CD4-positive, alpha-beta memory T cell (primary cell): ENCODE measurements at regions of chr14 and their contacts with region 1.

Region 1: GRCh38 chr14:49908432-49908781 is 15.5 kb downstream of the ARF6 start:
- DNase-seq: no peak
- H3K4me3 ChIP-seq: no peak overlapping the region
- H3K4me3 Mint-ChIP-seq: peak overlapping the region in 1 of 8 donors; percentile 39
- H3K27ac ChIP-seq: no peak overlapping the region
- H3K27ac Mint-ChIP-seq: peak overlapping the region in 2 of 7 donors; percentile 8 to 70
- H3K4me1 ChIP-seq: peaks cover 38% of the 10 kb centered on the region
- H3K4me1 Mint-ChIP-seq: peaks cover 18 to 42% (median 32%) of the 10 kb centered on the region in 4 donors
- H3K27me3 ChIP-seq: no peaks in the 10 kb centered on the region
- H3K27me3 Mint-ChIP-seq: no peaks in the 10 kb centered on the region

Region 2: DNA sequence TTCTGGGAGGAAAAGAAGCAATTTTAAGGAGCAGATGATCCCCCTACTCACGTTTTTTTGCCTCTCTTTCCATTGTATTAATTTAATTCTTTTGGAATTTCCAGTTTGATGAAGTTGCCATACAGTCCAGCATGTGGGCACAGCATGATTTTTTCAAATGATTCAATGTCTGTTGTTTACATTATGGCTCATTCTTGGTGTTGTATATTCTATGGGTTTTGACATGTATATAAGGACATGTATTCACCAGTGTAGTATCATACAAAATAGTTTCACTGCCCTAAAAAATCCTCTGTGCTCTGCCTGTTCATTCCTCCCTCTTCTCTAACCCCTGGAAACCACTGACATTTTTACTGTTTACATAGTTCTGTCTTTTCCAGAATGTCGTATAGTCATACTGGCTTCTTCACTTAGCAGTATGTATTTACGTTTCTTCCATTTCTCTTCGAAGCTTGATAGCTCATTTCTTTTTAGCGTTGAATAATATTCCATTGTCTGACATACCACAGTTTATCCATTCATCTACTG is 153.8 kb before region 1 on chr14:
- CTCF ChIA-PET with region 1: no interaction called
- POLR2A ChIA-PET with region 1: no interaction called
- intact Hi-C with region 1: no loop called
- DNase-seq: no peak
- H3K4me3 ChIP-seq: no peak overlapping the region
- H3K4me3 Mint-ChIP-seq: no peak overlapping the region
- H3K27ac ChIP-seq: no peak overlapping the region
- H3K27ac Mint-ChIP-seq: no peak overlapping the region
- H3K4me1 ChIP-seq: no peaks in the 10 kb centered on the region
- H3K4me1 Mint-ChIP-seq: peaks cover 0 to 1% (median 0%) of the 10 kb centered on the region in 4 donors
- H3K27me3 ChIP-seq: no peaks in the 10 kb centered on the region
- H3K27me3 Mint-ChIP-seq: no peaks in the 10 kb centered on the region

Region 3: GRCh38 chr14:49897968-49898367 is 10.4 kb before region 1 on chr14:
- CTCF ChIA-PET with region 1: interaction called, 3 read pairs
- POLR2A ChIA-PET with region 1: interaction called, 9 read pairs
- intact Hi-C with region 1: loop called (anchors 1 kb)
- DNase-seq: no peak
- H3K4me3 ChIP-seq: peak overlapping the region; percentile 33 to 58
- H3K4me3 Mint-ChIP-seq: peak overlapping the region; percentile 65 to 99 (median 84)
- H3K27ac ChIP-seq: peak overlapping the region; percentile 98
- H3K27ac Mint-ChIP-seq: peak overlapping the region; percentile 85 to 97 (median 94)
- H3K4me1 ChIP-seq: peaks cover 42% of the 10 kb centered on the region
- H3K4me1 Mint-ChIP-seq: peaks cover 21 to 62% (median 36%) of the 10 kb centered on the region in 4 donors
- H3K27me3 ChIP-seq: no peaks in the 10 kb centered on the region
- H3K27me3 Mint-ChIP-seq: no peaks in the 10 kb centered on the region

Region 4: DNA sequence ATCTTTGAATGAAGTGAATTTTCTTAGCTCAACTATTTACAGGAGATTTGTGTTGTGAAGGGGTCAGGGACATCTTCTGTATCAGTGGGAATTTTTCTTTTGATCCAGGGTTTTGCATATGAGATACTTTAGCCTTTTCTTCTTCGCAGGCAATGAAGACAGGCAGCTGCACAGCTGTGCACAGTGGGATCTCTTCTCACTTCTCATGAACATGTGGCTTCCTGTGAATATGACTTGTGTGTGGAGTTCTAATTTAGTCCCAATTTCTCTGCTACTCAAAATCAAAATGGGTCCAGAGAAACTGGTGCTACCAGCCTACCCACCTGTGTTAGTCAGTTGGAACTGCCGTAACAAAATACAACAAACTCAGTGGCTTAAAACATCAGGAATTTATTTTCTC is 22.3 kb after region 1 on chr14:
- CTCF ChIA-PET with region 1: no interaction called
- POLR2A ChIA-PET with region 1: no interaction called
- intact Hi-C with region 1: no loop called
- DNase-seq: no peak
- H3K4me3 ChIP-seq: no peak overlapping the region
- H3K4me3 Mint-ChIP-seq: peak overlapping the region in 1 of 8 donors; percentile 33
- H3K27ac ChIP-seq: no peak overlapping the region
- H3K27ac Mint-ChIP-seq: peak overlapping the region in 1 of 7 donors; percentile 23
- H3K4me1 ChIP-seq: no peaks in the 10 kb centered on the region
- H3K4me1 Mint-ChIP-seq: peaks cover 0 to 3% (median under 1%) of the 10 kb centered on the region in 4 donors
- H3K27me3 ChIP-seq: no peaks in the 10 kb centered on the region
- H3K27me3 Mint-ChIP-seq: no peaks in the 10 kb centered on the region

Region 5: GRCh38 chr14:49940808-49941421 is 32.5 kb after region 1 on chr14:
- CTCF ChIA-PET with region 1: interaction called, 3 read pairs
- POLR2A ChIA-PET with region 1: interaction called, 16 read pairs
- intact Hi-C with region 1: no loop called
- DNase-seq: peak in 4 of 5 donors; percentile 40 to 56 (median 48)
- H3K4me3 ChIP-seq: peak overlapping the region in 1 of 2 donors; percentile 15
- H3K4me3 Mint-ChIP-seq: peak overlapping the region; percentile 60 to 86 (median 68)
- H3K27ac ChIP-seq: peak overlapping the region; percentile 23
- H3K27ac Mint-ChIP-seq: peak overlapping the region; percentile 31 to 93 (median 88)
- H3K4me1 ChIP-seq: peaks cover 52% of the 10 kb centered on the region
- H3K4me1 Mint-ChIP-seq: peaks cover 44 to 72% (median 61%) of the 10 kb centered on the region in 4 donors
- H3K27me3 ChIP-seq: no peaks in the 10 kb centered on the region
- H3K27me3 Mint-ChIP-seq: no peaks in the 10 kb centered on the region

Region 6: GRCh38 chr14:49946320-49947141 is 38.1 kb after region 1 on chr14:
- CTCF ChIA-PET with region 1: interaction called, 3 read pairs
- POLR2A ChIA-PET with region 1: interaction called, 16 read pairs
- intact Hi-C with region 1: no loop called
- DNase-seq: peak; percentile 40 to 67 (median 41)
- H3K4me3 ChIP-seq: peak overlapping the region in 1 of 2 donors; percentile 11
- H3K4me3 Mint-ChIP-seq: peak overlapping the region; percentile 1 to 78 (median 67)
- H3K27ac ChIP-seq: peak overlapping the region; percentile 64
- H3K27ac Mint-ChIP-seq: peak overlapping the region; percentile 90 to 97 (median 94)
- H3K4me1 ChIP-seq: peaks cover 69% of the 10 kb centered on the region
- H3K4me1 Mint-ChIP-seq: peaks cover 59 to 91% (median 72%) of the 10 kb centered on the region in 4 donors
- H3K27me3 ChIP-seq: no peaks in the 10 kb centered on the region
- H3K27me3 Mint-ChIP-seq: no peaks in the 10 kb centered on the region